ENCODE measurements at regions of chr9 and their contacts with region 1.

Region 1: DNA sequence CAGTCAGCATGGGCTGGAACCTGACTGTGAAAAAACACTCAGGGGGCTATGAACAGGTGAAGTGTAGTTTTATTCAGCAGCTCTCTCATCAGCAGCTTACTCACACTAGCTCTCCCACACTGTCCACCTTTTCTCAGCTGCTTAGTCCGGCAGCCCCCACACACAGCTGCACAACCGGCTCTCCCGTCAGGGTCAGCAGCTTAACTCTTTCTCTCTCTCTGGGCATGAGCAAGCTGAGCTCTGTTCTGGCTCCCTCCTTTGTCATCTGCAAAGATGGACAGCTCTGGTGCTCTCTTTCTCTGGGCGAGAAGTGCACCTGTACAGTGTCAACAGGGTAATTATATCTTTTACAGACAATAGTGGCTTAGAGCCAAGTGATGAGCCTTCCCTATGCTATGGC is 8.2 kb downstream of the DMAC1 start:
- DNase-seq: no peak

Region 2: DNA sequence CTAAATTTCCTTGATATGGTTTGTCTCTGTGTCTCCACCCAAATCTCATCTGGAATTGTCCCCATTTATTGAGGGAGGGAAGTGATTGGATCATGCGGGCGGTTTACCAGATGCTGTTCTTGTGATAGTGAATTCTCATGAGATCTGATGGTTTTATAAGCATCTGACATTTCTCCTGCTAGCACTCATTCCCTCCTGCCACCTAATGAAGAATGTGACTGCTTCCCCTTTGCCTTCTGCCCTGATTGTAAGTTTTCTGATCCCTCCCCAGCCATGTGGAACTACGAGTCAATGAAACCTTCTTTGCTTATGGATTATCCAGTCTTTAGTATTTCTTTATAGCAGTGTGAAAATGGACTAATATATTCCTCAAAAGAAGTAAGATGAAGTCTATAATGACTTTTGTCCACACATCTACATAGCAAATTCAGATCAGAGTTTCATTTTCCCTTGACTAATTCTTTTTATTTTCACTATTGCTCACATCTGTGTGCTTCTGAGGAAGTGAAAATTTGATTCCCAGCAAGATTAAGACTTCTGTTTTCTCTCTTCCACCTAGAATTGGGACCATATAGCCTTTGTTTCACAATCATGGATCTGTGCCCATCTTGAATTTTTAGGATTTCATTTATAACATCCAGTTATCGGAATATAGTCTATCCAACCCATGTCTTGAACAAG is 385.3 kb before region 1 on chr9:
- intact Hi-C with region 1: loop called in 1 of 2 experiments (anchors 5 kb)
- DNase-seq: no peak

Region 3: GRCh38 chr9:7739595-7739994 is 51.8 kb before region 1 on chr9:
- intact Hi-C with region 1: no loop called
- DNase-seq: no peak

Region 4: DNA sequence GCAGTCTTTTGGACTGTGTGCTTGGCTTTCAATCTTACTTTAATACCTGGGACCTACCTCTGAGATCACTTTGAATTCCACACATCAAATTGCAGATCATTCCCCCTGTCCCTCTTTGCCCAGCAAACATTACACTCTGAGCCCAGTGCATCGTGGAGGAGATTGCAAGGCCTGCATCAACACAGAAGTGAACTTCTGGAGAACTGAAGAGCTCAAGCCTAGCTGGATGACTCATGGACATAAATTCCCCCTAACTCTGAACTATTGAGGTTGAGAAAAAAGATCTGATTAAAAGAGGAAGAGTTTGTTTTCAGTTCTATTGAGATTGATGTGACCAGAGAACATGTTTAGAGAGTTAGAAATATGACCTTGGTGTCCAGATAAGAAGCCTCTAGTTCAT is 324.2 kb after region 1 on chr9:
- intact Hi-C with region 1: no loop called
- DNase-seq: no peak

Measured in posterior vena cava (tissue), 2 donors.